ENCODE measurements at regions of chr2 and their contacts with region 1.

Region 1: GRCh38 chr2:218908721-218909619 is 28.3 kb downstream of the WNT10A start:
- DNase-seq: peak; percentile 77 to 94 (median 88)
- ATAC-seq: peak; percentile 99
- H3K4me3 ChIP-seq: peak overlapping the region; percentile 56
- H3K4me3 Mint-ChIP-seq: peak overlapping the region; percentile 81
- H3K27ac ChIP-seq: peak overlapping the region; percentile 32
- H3K27ac Mint-ChIP-seq: peak overlapping the region; percentile 62
- H3K4me1 ChIP-seq: peaks cover 8% of the 10 kb centered on the region
- H3K4me1 Mint-ChIP-seq: peaks cover 14% of the 10 kb centered on the region
- H3K27me3 ChIP-seq: no peaks in the 10 kb centered on the region
- H3K27me3 Mint-ChIP-seq: peaks cover 15% of the 10 kb centered on the region
- CTCF ChIP-seq: no peak

Region 2: DNA sequence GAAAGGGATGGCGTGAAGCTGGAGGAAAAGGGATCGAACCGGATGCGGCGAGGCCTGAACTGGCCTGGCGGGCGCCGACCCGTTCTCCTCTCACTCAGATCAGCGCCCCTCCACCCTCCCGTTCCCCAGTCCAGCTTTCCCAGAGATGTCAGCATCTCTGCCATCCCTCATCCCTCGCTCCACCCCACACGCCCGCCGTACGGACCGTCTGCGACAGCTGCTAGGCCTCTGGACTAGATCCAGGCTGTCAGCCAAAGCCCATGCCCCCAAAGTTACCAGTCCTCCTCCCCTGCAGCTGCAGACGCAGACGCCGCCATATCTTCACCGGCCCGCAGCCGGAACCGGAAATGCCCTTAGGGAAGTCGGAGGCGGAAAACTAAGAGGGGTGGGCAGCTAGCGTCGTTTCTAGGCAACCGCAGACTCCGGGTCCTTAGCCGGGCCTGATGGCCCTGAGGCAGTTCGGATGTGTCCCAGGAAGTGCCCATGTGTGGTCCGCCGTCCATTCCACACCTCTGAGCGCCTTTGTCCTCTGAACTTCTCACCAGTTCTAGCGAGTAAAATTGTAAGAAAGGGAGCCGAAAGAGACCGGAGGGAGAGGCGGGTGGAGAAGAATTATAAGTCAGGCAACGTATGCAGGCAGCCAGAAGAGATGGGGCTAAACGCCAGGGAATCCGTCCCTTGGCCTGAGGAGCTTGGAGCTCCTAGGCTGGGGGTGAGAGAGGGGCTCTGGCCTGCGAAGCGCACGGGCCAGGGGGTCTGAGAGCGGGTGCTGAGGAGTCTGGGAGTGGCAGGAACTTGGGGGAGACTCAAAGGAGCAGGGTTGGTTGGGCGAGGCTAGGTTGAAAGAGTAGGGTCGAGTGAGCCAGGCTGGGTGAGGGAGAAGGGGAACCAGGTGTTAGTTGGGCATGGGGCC is 237.1 kb before region 1 on chr2 and contains the starts of genes RNF25 and STK36:
- CTCF ChIA-PET with region 1: no interaction called
- POLR2A ChIA-PET with region 1: no interaction called
- intact Hi-C with region 1: loop called in 1 of 2 experiments (anchors 5 kb)
- DNase-seq: peak; percentile 56 to 90 (median 82)
- ATAC-seq: peak; percentile 92
- H3K4me3 ChIP-seq: peak within 1 kb of the TSS; percentile 80 to 86
- H3K4me3 Mint-ChIP-seq: peak within 1 kb of the TSS; percentile 97
- H3K27ac ChIP-seq: peak within 1 kb of the TSS; percentile 74 to 83
- H3K27ac Mint-ChIP-seq: peak within 1 kb of the TSS; percentile 96
- H3K4me1 ChIP-seq: peaks cover 16% of the 10 kb centered on the region
- H3K4me1 Mint-ChIP-seq: peaks cover 25% of the 10 kb centered on the region
- H3K27me3 ChIP-seq: no peaks in the 10 kb centered on the region
- H3K27me3 Mint-ChIP-seq: no peaks in the 10 kb centered on the region
- CTCF ChIP-seq: no peak
- total RNA-seq, gene RNF25: 26.0 to 29.3 TPM
- total RNA-seq, gene STK36: 7.5 to 8.1 TPM

Region 3: GRCh38 chr2:218876562-218877219 is 32.3 kb before region 1 on chr2:
- CTCF ChIA-PET with region 1: interaction called, 1,148 read pairs
- POLR2A ChIA-PET with region 1: interaction called, 3 read pairs
- intact Hi-C with region 1: no loop called
- DNase-seq: peak; percentile 61 to 86 (median 78)
- ATAC-seq: no peak
- H3K4me3 ChIP-seq: no peak overlapping the region
- H3K4me3 Mint-ChIP-seq: no peak overlapping the region
- H3K27ac ChIP-seq: no peak overlapping the region
- H3K27ac Mint-ChIP-seq: no peak overlapping the region
- H3K4me1 ChIP-seq: peaks cover 59% of the 10 kb centered on the region
- H3K4me1 Mint-ChIP-seq: peaks cover 41% of the 10 kb centered on the region
- H3K27me3 ChIP-seq: peaks cover 16 to 30% of the 10 kb centered on the region in 2 experiments
- H3K27me3 Mint-ChIP-seq: peaks cover 34% of the 10 kb centered on the region
- CTCF ChIP-seq: peak; percentile 99

Region 4: GRCh38 chr2:218898109-218898878 is 10.7 kb before region 1 on chr2:
- CTCF ChIA-PET with region 1: interaction called, 29 read pairs
- POLR2A ChIA-PET with region 1: interaction called, 3 read pairs
- intact Hi-C with region 1: loop called in 1 of 2 experiments (anchors 2 kb)
- DNase-seq: peak; percentile 60 to 90 (median 81)
- ATAC-seq: peak; percentile 10
- H3K4me3 ChIP-seq: peak overlapping the region in 1 of 2 experiments; percentile 57
- H3K4me3 Mint-ChIP-seq: peak overlapping the region; percentile 80
- H3K27ac ChIP-seq: no peak overlapping the region
- H3K27ac Mint-ChIP-seq: no peak overlapping the region
- H3K4me1 ChIP-seq: peaks cover 54% of the 10 kb centered on the region
- H3K4me1 Mint-ChIP-seq: peaks cover 45% of the 10 kb centered on the region
- H3K27me3 ChIP-seq: peaks cover 7 to 33% of the 10 kb centered on the region in 2 experiments
- H3K27me3 Mint-ChIP-seq: peaks cover 30% of the 10 kb centered on the region
- CTCF ChIP-seq: peak; percentile 99

Measured in CD8-positive, alpha-beta T cell (primary cell).